ENCODE measurements at regions of chr16 and their contacts with region 1.

Region 1: GRCh38 chr16:11133344-11133943 is 122.6 kb downstream of the SOCS1 start:
- DNase-seq: peak; percentile 88
- H3K4me3 Mint-ChIP-seq: peak overlapping the region; percentile 21
- H3K27ac Mint-ChIP-seq: peak overlapping the region; percentile 61
- H3K4me1 Mint-ChIP-seq: peaks cover 53% of the 10 kb centered on the region
- H3K27me3 Mint-ChIP-seq: no peaks in the 10 kb centered on the region
- CTCF ChIP-seq: no peak

Region 2: DNA sequence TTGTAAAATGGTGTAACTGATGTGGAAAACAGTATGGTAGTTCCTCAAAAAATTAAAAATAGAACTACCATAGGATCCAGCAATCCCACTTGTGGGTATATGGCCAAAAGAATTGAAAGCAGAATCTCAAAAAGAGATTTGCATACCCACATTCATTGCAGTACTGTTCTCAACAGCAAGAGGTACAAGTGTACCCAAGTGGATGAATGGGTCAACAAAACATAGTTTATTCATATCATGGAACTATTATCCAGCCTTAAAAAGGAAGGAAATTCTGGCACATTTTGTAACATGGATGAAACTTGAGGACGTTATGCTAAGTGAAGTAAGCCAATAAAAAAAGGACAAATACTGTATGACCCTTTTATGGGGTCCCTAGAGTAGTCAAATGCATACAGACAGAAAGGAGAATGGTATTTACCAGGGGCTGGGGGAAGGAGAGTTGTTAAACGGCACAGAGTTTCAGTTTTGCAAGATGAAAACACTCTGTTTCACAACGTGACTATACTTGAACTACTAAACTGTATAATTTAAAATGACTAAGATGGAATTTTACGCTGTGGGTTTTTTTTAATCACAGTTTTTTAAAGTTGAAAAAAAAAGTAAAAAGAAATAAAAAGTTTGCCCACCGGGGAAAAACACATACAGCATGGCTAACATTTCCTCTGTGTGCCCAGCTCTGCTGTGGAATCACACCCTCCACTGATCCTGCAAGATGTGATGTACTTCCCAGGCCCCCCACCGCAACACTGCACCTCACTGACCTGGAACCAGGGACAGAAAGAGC is 320.9 kb before region 1 on chr16:
- CTCF ChIA-PET with region 1: no interaction called
- POLR2A ChIA-PET with region 1: no interaction called
- intact Hi-C with region 1: no loop called
- DNase-seq: no peak
- H3K4me3 Mint-ChIP-seq: no peak overlapping the region
- H3K27ac Mint-ChIP-seq: no peak overlapping the region
- H3K4me1 Mint-ChIP-seq: no peaks in the 10 kb centered on the region
- H3K27me3 Mint-ChIP-seq: no peaks in the 10 kb centered on the region
- CTCF ChIP-seq: no peak

Region 3: GRCh38 chr16:10971560-10971961 is 161.9 kb before region 1 on chr16:
- CTCF ChIA-PET with region 1: interaction called, 5 read pairs
- POLR2A ChIA-PET with region 1: interaction called, 3 read pairs
- intact Hi-C with region 1: loop called (anchors 1 kb)
- DNase-seq: peak; percentile 69
- H3K4me3 Mint-ChIP-seq: no peak overlapping the region
- H3K27ac Mint-ChIP-seq: no peak overlapping the region
- H3K4me1 Mint-ChIP-seq: peaks cover 5% of the 10 kb centered on the region
- H3K27me3 Mint-ChIP-seq: no peaks in the 10 kb centered on the region
- CTCF ChIP-seq: peak; percentile 72

Region 4: GRCh38 chr16:11183035-11183812 is 49.8 kb after region 1 on chr16:
- CTCF ChIA-PET with region 1: no interaction called
- POLR2A ChIA-PET with region 1: no interaction called
- intact Hi-C with region 1: no loop called
- DNase-seq: no peak
- H3K4me3 Mint-ChIP-seq: no peak overlapping the region
- H3K27ac Mint-ChIP-seq: no peak overlapping the region
- H3K4me1 Mint-ChIP-seq: peaks cover 8% of the 10 kb centered on the region
- H3K27me3 Mint-ChIP-seq: no peaks in the 10 kb centered on the region
- CTCF ChIP-seq: no peak

Region 5: GRCh38 chr16:11201498-11202259 is 68.2 kb after region 1 on chr16:
- CTCF ChIA-PET with region 1: no interaction called
- POLR2A ChIA-PET with region 1: no interaction called
- intact Hi-C with region 1: loop called (anchors 5 kb)
- DNase-seq: peak; percentile 66
- H3K4me3 Mint-ChIP-seq: peak overlapping the region; percentile 15
- H3K27ac Mint-ChIP-seq: peak overlapping the region; percentile 49
- H3K4me1 Mint-ChIP-seq: peaks cover 32% of the 10 kb centered on the region
- H3K27me3 Mint-ChIP-seq: no peaks in the 10 kb centered on the region
- CTCF ChIP-seq: no peak

Region 6: DNA sequence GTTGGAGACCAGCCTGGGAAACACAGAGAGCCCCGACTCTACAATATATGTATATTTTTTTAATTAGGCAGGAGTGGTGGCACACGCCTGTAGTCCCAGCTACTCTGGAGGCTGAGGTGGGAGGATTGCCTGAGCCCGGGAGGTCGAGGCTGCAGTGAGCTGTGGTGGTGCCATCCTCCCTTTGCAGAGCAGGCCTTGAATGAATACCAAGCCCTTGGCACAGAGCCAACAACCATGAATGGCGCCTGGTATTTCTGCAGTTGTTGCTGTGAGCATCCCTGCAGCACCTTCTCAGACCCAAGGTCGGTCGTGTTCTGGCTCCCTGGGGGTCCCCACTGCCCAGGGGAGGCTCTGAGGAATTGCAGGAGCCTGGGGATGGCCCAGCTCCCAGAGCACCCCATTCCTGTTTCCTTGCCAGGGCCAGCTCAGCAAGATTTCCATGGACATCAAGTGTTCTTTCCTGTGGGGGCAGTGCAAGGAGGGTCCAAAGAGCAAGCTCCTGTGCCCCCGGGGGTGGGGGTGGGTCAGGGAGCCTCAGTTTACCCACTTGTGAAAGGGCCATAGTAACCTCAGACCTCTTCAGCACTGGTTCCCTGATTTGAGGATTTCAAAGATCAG is 186.2 kb after region 1 on chr16:
- CTCF ChIA-PET with region 1: no interaction called
- POLR2A ChIA-PET with region 1: no interaction called
- intact Hi-C with region 1: no loop called
- DNase-seq: peak; percentile 52
- H3K4me3 Mint-ChIP-seq: no peak overlapping the region
- H3K27ac Mint-ChIP-seq: no peak overlapping the region
- H3K4me1 Mint-ChIP-seq: no peaks in the 10 kb centered on the region
- H3K27me3 Mint-ChIP-seq: no peaks in the 10 kb centered on the region
- CTCF ChIP-seq: no peak

Region 7: GRCh38 chr16:11361701-11362451 is 228.4 kb after region 1 on chr16:
- CTCF ChIA-PET with region 1: no interaction called
- POLR2A ChIA-PET with region 1: no interaction called
- intact Hi-C with region 1: loop called (anchors 10 kb)
- DNase-seq: no peak
- H3K4me3 Mint-ChIP-seq: no peak overlapping the region
- H3K27ac Mint-ChIP-seq: no peak overlapping the region
- H3K4me1 Mint-ChIP-seq: peaks cover 29% of the 10 kb centered on the region
- H3K27me3 Mint-ChIP-seq: no peaks in the 10 kb centered on the region
- CTCF ChIP-seq: no peak

Region 8: DNA sequence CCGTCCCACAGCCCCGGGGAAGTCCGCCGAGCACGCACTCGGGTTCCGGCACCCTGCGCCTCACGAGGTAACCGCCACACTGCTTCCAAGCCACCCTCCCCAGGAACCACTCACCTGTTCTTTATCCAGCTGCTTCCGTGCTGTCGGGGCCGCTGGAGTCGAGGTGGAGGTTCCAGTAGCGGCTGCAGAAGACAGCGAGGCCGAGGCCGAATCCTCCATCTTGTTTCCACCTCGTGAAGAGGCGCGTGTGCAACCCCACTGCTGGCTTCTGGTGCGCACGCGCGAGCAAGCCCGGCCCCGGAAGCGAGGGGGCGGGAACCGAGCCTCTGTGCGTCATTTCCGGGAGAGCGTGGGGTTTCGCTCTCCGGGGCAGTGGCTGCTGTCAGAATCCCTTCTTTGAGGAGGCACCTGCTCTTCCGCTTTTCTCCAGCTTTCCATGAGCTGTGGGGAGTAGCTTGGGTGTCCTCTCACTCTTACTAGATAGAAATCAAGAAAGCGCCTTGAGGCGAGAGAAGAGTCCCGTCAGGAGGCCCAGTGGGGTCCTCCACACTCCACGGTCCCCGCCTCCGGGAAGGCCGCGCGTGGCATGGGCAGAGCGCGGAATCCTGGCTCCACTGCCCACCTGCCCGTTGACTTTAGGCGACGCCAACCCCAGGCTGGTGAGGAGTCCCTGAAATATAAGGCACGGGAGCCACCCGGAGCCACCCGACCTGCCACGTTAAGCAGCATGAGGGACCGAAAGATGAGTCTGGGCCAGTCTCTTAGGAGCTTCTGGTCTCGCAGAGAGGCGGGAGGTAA is 718.0 kb after region 1 on chr16 and contains the start of gene RSL1D1:
- CTCF ChIA-PET with region 1: no interaction called
- POLR2A ChIA-PET with region 1: no interaction called
- intact Hi-C with region 1: no loop called
- DNase-seq: peak; percentile 92
- H3K4me3 Mint-ChIP-seq: peak within 1 kb of the TSS; percentile 93
- H3K27ac Mint-ChIP-seq: peak within 1 kb of the TSS; percentile 90
- H3K4me1 Mint-ChIP-seq: peaks cover 22% of the 10 kb centered on the region
- H3K27me3 Mint-ChIP-seq: no peaks in the 10 kb centered on the region
- CTCF ChIP-seq: no peak
- total RNA-seq, gene RSL1D1: 302 and 406 TPM in 2 replicates

Measured in MCF 10A (cell line).